B cell (primary cell): ENCODE measurements at regions of chr18 and their contacts with region 1.

Region 1: DNA sequence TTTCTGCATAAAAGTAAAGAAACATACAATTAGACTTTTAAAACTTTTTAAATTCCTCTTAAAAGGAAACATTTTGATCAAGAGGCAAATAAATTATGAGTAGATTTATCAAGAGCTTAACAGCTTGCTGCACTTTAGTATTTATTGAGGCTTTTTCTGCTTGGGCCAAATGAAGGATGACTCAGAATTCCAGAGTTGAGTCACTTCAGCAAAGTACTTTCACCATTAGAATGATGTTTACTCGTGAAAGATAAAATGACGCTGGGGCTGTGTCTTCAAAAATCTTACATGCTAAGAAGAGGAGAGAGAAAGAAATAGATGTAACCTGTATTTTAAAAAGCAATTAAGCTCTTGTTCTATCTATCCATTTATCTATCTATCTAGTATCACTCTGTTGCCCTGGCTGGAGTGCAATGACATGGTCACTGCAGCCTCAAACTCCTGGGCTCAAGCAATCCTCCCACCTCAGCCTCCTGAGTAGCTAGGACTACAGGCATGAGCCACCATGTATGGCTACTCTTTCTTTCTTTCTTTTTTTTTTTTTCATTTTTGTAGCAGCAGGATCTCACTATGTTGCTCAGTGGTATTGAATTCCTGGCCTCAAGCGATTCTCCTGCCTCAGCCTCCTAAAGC is 75.3 kb upstream of the RIOK3 start:
- DNase-seq: no peak
- ATAC-seq: no peak
- H3K4me3 ChIP-seq: no peak overlapping the region
- H3K4me3 Mint-ChIP-seq: no peak overlapping the region
- H3K27ac ChIP-seq: no peak overlapping the region
- H3K27ac Mint-ChIP-seq: no peak overlapping the region
- H3K4me1 ChIP-seq: no peaks in the 10 kb centered on the region
- H3K4me1 Mint-ChIP-seq: no peaks in the 10 kb centered on the region
- H3K27me3 ChIP-seq: no peaks in the 10 kb centered on the region
- H3K27me3 Mint-ChIP-seq: no peaks in the 10 kb centered on the region
- CTCF ChIP-seq: no peak

Region 2: GRCh38 chr18:22800551-22800951 is 577.2 kb before region 1 on chr18:
- CTCF ChIA-PET with region 1: interaction called, 13 read pairs
- POLR2A ChIA-PET with region 1: no interaction called
- intact Hi-C with region 1: loop called (anchors 1 kb)
- DNase-seq: no peak
- ATAC-seq: no peak
- H3K4me3 ChIP-seq: no peak overlapping the region
- H3K4me3 Mint-ChIP-seq: no peak overlapping the region
- H3K27ac ChIP-seq: no peak overlapping the region
- H3K27ac Mint-ChIP-seq: no peak overlapping the region
- H3K4me1 ChIP-seq: no peaks in the 10 kb centered on the region
- H3K4me1 Mint-ChIP-seq: no peaks in the 10 kb centered on the region
- H3K27me3 ChIP-seq: peaks cover 0 to 2% (median 0%) of the 10 kb centered on the region in 4 experiments
- H3K27me3 Mint-ChIP-seq: no peaks in the 10 kb centered on the region
- CTCF ChIP-seq: no peak

Region 3: DNA sequence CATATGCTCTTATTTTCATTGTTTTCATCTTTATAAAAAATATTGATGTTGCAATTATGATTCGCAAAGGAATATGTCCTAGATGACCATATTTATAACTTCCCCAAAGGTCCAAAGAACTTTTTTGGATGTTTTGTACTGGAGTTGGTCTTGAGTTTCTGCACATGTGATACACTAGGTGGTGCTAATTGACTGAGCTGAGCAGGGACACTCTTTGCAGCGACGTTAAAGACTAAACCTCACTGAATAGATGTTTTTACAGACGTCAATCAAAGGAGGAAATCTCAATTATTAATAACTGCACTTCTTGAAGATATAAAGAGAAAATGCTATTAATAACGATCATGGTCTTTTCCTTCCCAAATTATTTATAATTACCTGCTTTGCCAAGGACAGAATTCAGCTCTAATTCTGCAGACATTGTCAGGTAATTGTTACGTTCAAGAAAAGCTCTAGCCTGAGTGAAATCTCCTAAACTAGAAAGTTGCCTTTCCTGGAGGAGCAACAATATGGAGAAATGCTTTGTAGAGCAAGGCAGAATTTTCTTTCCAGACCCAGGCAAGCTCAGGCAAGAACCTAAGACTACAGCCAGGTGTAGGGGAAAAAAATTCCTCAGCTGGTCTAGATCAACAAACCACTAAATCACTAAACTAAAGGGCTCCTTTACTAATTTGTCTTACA is 564.0 kb before region 1 on chr18:
- CTCF ChIA-PET with region 1: interaction called, 18 read pairs
- POLR2A ChIA-PET with region 1: no interaction called
- intact Hi-C with region 1: no loop called
- DNase-seq: peak; percentile 44
- ATAC-seq: no peak
- H3K4me3 ChIP-seq: no peak overlapping the region
- H3K4me3 Mint-ChIP-seq: no peak overlapping the region
- H3K27ac ChIP-seq: no peak overlapping the region
- H3K27ac Mint-ChIP-seq: no peak overlapping the region
- H3K4me1 ChIP-seq: no peaks in the 10 kb centered on the region
- H3K4me1 Mint-ChIP-seq: no peaks in the 10 kb centered on the region
- H3K27me3 ChIP-seq: no peaks in the 10 kb centered on the region
- H3K27me3 Mint-ChIP-seq: peaks cover 16% of the 10 kb centered on the region
- CTCF ChIP-seq: peak; percentile 61

Region 4: DNA sequence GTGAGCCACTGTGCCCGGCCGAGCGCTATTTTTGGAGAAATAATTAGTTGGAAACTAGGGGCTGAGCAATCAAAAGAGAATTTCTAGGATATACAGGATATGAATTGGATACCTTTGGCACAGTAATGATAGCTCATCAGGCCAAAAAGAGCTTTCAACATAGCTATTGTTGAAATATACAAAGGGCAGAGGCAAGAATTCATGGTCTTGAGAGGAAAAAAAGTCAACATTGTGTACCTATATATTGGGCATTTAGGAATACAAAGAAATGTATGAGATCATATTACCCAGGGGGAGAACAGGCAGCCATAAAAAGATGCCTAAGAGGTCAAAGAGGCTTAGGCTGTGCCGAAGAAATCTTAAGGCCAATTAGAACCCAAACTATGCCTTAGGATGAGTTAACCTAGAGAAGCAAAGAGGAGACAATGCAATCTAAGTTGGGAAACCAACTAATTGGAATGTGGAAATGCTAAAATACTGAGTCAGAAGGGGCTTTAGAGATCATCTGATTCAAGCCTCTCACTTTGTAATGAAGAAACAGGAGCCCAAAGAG is 345.7 kb before region 1 on chr18:
- CTCF ChIA-PET with region 1: interaction called, 12 read pairs
- POLR2A ChIA-PET with region 1: no interaction called
- intact Hi-C with region 1: loop called (anchors 2 kb)
- DNase-seq: no peak
- ATAC-seq: no peak
- H3K4me3 ChIP-seq: no peak overlapping the region
- H3K4me3 Mint-ChIP-seq: no peak overlapping the region
- H3K27ac ChIP-seq: no peak overlapping the region
- H3K27ac Mint-ChIP-seq: no peak overlapping the region
- H3K4me1 ChIP-seq: no peaks in the 10 kb centered on the region
- H3K4me1 Mint-ChIP-seq: no peaks in the 10 kb centered on the region
- H3K27me3 ChIP-seq: no peaks in the 10 kb centered on the region
- H3K27me3 Mint-ChIP-seq: no peaks in the 10 kb centered on the region
- CTCF ChIP-seq: no peak

Region 5: GRCh38 chr18:23131693-23132319 is 246.0 kb before region 1 on chr18:
- CTCF ChIA-PET with region 1: interaction called, 78 read pairs
- POLR2A ChIA-PET with region 1: no interaction called
- intact Hi-C with region 1: loop called (anchors 1 kb)
- DNase-seq: peak; percentile 85
- ATAC-seq: no peak
- H3K4me3 ChIP-seq: no peak overlapping the region
- H3K4me3 Mint-ChIP-seq: no peak overlapping the region
- H3K27ac ChIP-seq: no peak overlapping the region
- H3K27ac Mint-ChIP-seq: no peak overlapping the region
- H3K4me1 ChIP-seq: peaks cover 24 to 28% of the 10 kb centered on the region in 2 donors
- H3K4me1 Mint-ChIP-seq: peaks cover 21% of the 10 kb centered on the region
- H3K27me3 ChIP-seq: peaks cover 0 to 33% (median 16%) of the 10 kb centered on the region in 4 experiments
- H3K27me3 Mint-ChIP-seq: peaks cover 16% of the 10 kb centered on the region
- CTCF ChIP-seq: peak; percentile 95

Region 6: GRCh38 chr18:24039671-24040070 is 661.9 kb after region 1 on chr18:
- CTCF ChIA-PET with region 1: no interaction called
- POLR2A ChIA-PET with region 1: no interaction called
- intact Hi-C with region 1: no loop called
- DNase-seq: no peak
- ATAC-seq: no peak
- H3K4me3 ChIP-seq: no peak overlapping the region
- H3K4me3 Mint-ChIP-seq: no peak overlapping the region
- H3K27ac ChIP-seq: no peak overlapping the region
- H3K27ac Mint-ChIP-seq: no peak overlapping the region
- H3K4me1 ChIP-seq: peaks cover 5 to 11% of the 10 kb centered on the region in 2 donors
- H3K4me1 Mint-ChIP-seq: peaks cover 52% of the 10 kb centered on the region
- H3K27me3 ChIP-seq: no peaks in the 10 kb centered on the region
- H3K27me3 Mint-ChIP-seq: no peaks in the 10 kb centered on the region
- CTCF ChIP-seq: no peak